MCF 10A (cell line): ENCODE measurements at regions of chr1 and their contacts with region 1.

Region 1: DNA sequence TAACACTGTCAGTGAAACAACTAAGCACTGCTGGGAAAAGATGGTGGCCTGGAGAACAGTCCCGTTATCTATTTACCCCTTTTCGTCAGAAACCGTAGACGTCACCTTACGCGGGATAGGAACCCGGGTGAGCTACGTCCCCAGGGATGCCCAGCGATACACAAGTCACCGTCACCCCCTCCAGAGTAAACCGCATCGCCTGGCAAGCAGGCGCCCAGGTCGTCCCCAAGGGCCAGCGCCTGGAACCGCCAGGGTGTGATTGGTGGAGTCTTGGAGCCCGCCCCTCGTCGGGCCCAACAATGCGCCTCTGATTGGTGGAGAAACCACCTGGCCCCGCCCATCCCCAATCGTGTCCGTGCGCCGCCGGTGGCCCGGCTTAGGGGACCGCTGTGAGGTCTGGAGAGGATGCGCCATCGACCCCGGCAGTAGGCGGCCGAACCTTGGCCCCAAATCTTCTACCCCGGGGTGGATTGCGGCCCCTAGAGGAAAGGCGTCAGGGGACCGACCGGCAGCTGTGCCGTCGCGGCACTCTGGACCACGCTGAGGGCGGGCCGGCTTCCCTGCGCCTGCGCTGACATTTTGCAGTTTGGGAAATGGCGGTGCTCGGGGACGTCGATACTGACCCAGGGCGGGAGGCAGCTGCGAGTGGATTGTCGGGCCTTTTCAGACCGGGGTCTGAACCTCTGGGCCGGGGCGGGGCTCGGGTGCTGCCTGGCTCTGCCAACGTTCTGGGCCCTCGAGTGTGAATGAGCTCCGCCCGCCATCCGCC is 34.4 kb downstream of the SLC2A1 start:
- DNase-seq: no peak
- H3K4me3 Mint-ChIP-seq: peak overlapping the region; percentile 54
- H3K27ac Mint-ChIP-seq: no peak overlapping the region
- H3K4me1 Mint-ChIP-seq: peaks cover 18% of the 10 kb centered on the region
- H3K27me3 Mint-ChIP-seq: no peaks in the 10 kb centered on the region
- CTCF ChIP-seq: no peak

Region 2: GRCh38 chr1:42358791-42359190 is 565.5 kb before region 1 on chr1:
- CTCF ChIA-PET with region 1: no interaction called
- POLR2A ChIA-PET with region 1: no interaction called
- intact Hi-C with region 1: no loop called
- DNase-seq: no peak
- H3K4me3 Mint-ChIP-seq: no peak overlapping the region
- H3K27ac Mint-ChIP-seq: no peak overlapping the region
- H3K4me1 Mint-ChIP-seq: no peaks in the 10 kb centered on the region
- H3K27me3 Mint-ChIP-seq: peaks cover 29% of the 10 kb centered on the region
- CTCF ChIP-seq: no peak

Region 3: GRCh38 chr1:42913426-42914091 is 10.7 kb before region 1 on chr1:
- CTCF ChIA-PET with region 1: interaction called, 20 read pairs
- POLR2A ChIA-PET with region 1: interaction called, 11 read pairs
- intact Hi-C with region 1: no loop called
- DNase-seq: peak; percentile 88
- H3K4me3 Mint-ChIP-seq: no peak overlapping the region
- H3K27ac Mint-ChIP-seq: no peak overlapping the region
- H3K4me1 Mint-ChIP-seq: no peaks in the 10 kb centered on the region
- H3K27me3 Mint-ChIP-seq: no peaks in the 10 kb centered on the region
- CTCF ChIP-seq: peak; percentile 88

Region 4: GRCh38 chr1:42936309-42937078 is 12.2 kb after region 1 on chr1:
- CTCF ChIA-PET with region 1: interaction called, 32 read pairs
- POLR2A ChIA-PET with region 1: interaction called, 27 read pairs
- intact Hi-C with region 1: no loop called
- DNase-seq: peak; percentile 94
- H3K4me3 Mint-ChIP-seq: peak overlapping the region; percentile 38
- H3K27ac Mint-ChIP-seq: peak overlapping the region; percentile 87
- H3K4me1 Mint-ChIP-seq: peaks cover 72% of the 10 kb centered on the region
- H3K27me3 Mint-ChIP-seq: no peaks in the 10 kb centered on the region
- CTCF ChIP-seq: no peak

Region 5: GRCh38 chr1:42941640-42942330 is 17.5 kb after region 1 on chr1:
- CTCF ChIA-PET with region 1: interaction called, 32 read pairs
- POLR2A ChIA-PET with region 1: interaction called, 27 read pairs
- intact Hi-C with region 1: no loop called
- DNase-seq: peak; percentile 94
- H3K4me3 Mint-ChIP-seq: peak overlapping the region; percentile 54
- H3K27ac Mint-ChIP-seq: peak overlapping the region; percentile 58
- H3K4me1 Mint-ChIP-seq: peaks cover 78% of the 10 kb centered on the region
- H3K27me3 Mint-ChIP-seq: no peaks in the 10 kb centered on the region
- CTCF ChIP-seq: no peak

Region 6: GRCh38 chr1:43065191-43065590 is 140.9 kb after region 1 on chr1:
- CTCF ChIA-PET with region 1: interaction called, 150 read pairs
- POLR2A ChIA-PET with region 1: interaction called, 7 read pairs
- intact Hi-C with region 1: no loop called
- DNase-seq: peak; percentile 81
- H3K4me3 Mint-ChIP-seq: no peak overlapping the region
- H3K27ac Mint-ChIP-seq: no peak overlapping the region
- H3K4me1 Mint-ChIP-seq: no peaks in the 10 kb centered on the region
- H3K27me3 Mint-ChIP-seq: no peaks in the 10 kb centered on the region
- CTCF ChIP-seq: no peak